ENCODE measurements at regions of chr11 and their contacts with region 1.

Region 1: GRCh38 chr11:77055101-77055578 is 11.6 kb upstream of the CAPN5 start:
- DNase-seq: no peak
- CTCF ChIP-seq: no peak

Region 2: GRCh38 chr11:77091146-77091940 is 36.2 kb after region 1 on chr11:
- in situ Hi-C with region 1: loop called (anchors 5 kb)
- DNase-seq: peak; percentile 93
- CTCF ChIP-seq: peak; percentile 88

Region 3: GRCh38 chr11:77244243-77245027 is 189.3 kb after region 1 on chr11:
- in situ Hi-C with region 1: no loop called
- DNase-seq: no peak
- CTCF ChIP-seq: no peak

Region 4: DNA sequence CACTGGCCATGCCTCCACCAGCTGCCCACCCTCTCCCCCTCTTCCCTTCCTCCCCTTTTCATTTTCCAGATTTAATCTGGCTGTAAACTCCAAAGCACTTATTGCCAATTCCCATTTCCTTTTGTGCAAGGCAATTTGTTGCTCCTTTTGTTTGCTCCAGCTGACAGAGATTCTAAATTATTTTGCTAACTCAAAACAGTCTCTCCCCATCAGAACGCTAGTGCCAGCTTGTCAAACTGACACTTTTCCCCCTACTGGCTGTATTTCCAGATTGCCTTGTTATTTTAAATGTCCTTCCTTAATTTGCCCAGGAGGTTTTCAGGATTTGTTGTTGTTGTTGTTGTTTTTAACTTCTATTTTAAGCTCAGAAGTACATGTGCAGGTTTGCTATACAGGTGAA is 475.7 kb after region 1 on chr11:
- in situ Hi-C with region 1: no loop called
- DNase-seq: no peak
- CTCF ChIP-seq: no peak

Region 5: DNA sequence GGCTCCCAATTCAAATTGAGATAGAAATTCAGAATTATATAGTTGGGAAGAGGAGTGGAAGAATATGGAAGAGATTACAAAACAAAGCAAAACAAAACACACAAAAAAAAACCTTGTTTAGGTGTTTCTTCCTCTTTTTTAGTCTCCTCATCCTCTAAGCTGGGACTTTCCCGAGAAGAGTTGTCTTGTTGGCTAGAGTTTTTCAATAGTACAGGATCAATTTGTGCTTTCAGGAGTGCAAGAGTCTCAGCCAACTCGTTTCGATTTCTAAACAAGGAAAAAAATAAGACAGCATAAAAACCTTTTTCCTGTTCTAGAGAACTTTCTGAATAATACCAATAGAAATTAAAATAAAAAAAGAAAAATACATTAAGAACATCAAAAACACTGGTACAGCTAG is 670.3 kb after region 1 on chr11:
- in situ Hi-C with region 1: no loop called
- DNase-seq: no peak
- CTCF ChIP-seq: no peak